ENCODE measurements at regions of chr18 and their contacts with region 1.

Region 1: GRCh38 chr18:54444319-54444914 is 86.7 kb downstream of the C18orf54 start:
- DNase-seq: peak; percentile 61
- H3K4me3 Mint-ChIP-seq: no peak overlapping the region
- H3K27ac Mint-ChIP-seq: no peak overlapping the region
- H3K4me1 Mint-ChIP-seq: no peaks in the 10 kb centered on the region
- H3K27me3 Mint-ChIP-seq: peaks cover 19% of the 10 kb centered on the region

Region 2: DNA sequence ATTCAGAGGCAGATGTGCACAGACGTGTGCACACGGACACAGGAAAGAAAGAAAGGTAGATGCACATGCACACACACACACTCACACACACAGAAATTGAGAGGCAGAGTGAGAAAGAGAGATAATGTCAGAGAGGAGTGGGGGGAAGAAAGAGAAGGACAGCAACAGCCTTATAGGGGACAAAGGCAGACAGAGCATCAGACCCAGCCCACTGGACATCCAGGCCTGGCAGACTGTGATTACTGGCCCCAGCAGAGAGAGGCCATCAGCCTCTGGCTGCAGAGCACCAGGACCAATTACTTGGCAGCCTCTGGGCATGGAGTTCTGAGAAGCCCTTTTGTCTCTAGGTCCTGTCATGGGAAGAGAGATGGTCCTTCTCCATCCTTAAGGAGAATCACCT is 20.6 kb before region 1 on chr18:
- CTCF ChIA-PET with region 1: no interaction called
- DNase-seq: no peak
- H3K4me3 Mint-ChIP-seq: no peak overlapping the region
- H3K27ac Mint-ChIP-seq: no peak overlapping the region
- H3K4me1 Mint-ChIP-seq: no peaks in the 10 kb centered on the region
- H3K27me3 Mint-ChIP-seq: no peaks in the 10 kb centered on the region

Region 3: GRCh38 chr18:54671291-54671881 is 227.0 kb after region 1 on chr18:
- CTCF ChIA-PET with region 1: interaction called, 30 read pairs
- DNase-seq: no peak
- H3K4me3 Mint-ChIP-seq: no peak overlapping the region
- H3K27ac Mint-ChIP-seq: no peak overlapping the region
- H3K4me1 Mint-ChIP-seq: no peaks in the 10 kb centered on the region
- H3K27me3 Mint-ChIP-seq: no peaks in the 10 kb centered on the region